ENCODE measurements at regions of chr17 and their contacts with region 1.

Region 1: GRCh38 chr17:7435221-7435675 is at the start of gene TMEM102:
- DNase-seq: peak; percentile 97
- ATAC-seq: peak; percentile 90
- H3K4me3 ChIP-seq: peak within 1 kb of the TSS; percentile 17 to 35
- H3K27ac ChIP-seq: no peak within 1 kb of the TSS
- H3K4me1 ChIP-seq: no peaks in the 10 kb centered on the region
- H3K27me3 ChIP-seq: no peaks in the 10 kb centered on the region
- total RNA-seq, gene TMEM102: 3.6 to 5.1 TPM

Region 2: GRCh38 chr17:7403977-7404736 is 31.1 kb before region 1 on chr17 and contains the start of gene TMEM256:
- intact Hi-C with region 1: loop called in 1 of 2 experiments (anchors 2 kb)
- DNase-seq: peak; percentile 99
- ATAC-seq: peak; percentile 97
- H3K4me3 ChIP-seq: peak within 1 kb of the TSS; percentile 59 to 82
- H3K27ac ChIP-seq: peak within 1 kb of the TSS; percentile 70 to 84
- H3K4me1 ChIP-seq: no peaks in the 10 kb centered on the region
- H3K27me3 ChIP-seq: no peaks in the 10 kb centered on the region
- total RNA-seq, gene TMEM256: 35.0 to 40.1 TPM

Region 3: GRCh38 chr17:7484067-7484918 is 49.0 kb after region 1 on chr17 and contains the start of gene POLR2A:
- intact Hi-C with region 1: loop called (anchors 1 to 2 kb)
- DNase-seq: peak; percentile 99
- ATAC-seq: peak; percentile 93
- H3K4me3 ChIP-seq: peak within 1 kb of the TSS; percentile 56 to 91
- H3K27ac ChIP-seq: peak within 1 kb of the TSS; percentile 94 to 98
- H3K4me1 ChIP-seq: peaks cover 0 to 4% of the 10 kb centered on the region in 2 donors
- H3K27me3 ChIP-seq: peaks cover 0 to 1% of the 10 kb centered on the region in 2 donors
- total RNA-seq, gene POLR2A: 93.8 to 116 TPM

Region 4: DNA sequence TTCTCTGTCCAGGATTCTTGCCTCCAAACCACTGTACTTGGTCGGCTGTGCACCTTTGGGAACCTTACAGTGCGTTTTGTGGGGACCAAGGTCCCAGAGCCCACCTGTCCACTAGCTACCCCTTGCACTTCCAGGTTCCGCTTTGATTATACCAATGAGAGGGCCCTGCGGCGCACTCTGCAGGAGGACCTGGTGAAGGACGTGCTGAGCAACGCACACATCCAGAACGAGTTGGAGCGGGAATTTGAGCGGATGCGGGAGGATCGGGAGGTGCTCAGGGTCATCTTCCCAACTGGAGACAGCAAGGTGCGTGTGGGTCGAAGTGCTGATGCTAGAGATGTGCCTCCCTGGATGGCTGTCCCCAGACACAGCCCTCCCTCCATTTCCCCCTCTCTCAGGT is 67.7 kb after region 1 on chr17:
- intact Hi-C with region 1: no loop called
- DNase-seq: no peak
- ATAC-seq: no peak
- H3K4me3 ChIP-seq: no peak overlapping the region
- H3K27ac ChIP-seq: no peak overlapping the region
- H3K4me1 ChIP-seq: no peaks in the 10 kb centered on the region
- H3K27me3 ChIP-seq: no peaks in the 10 kb centered on the region

Region 5: GRCh38 chr17:7561028-7561575 is 125.9 kb after region 1 on chr17:
- intact Hi-C with region 1: loop called in 1 of 2 experiments (anchors 2 kb)
- DNase-seq: peak; percentile 94 to 97
- ATAC-seq: peak; percentile 89
- H3K4me3 ChIP-seq: peak overlapping the region; percentile 68 to 77
- H3K27ac ChIP-seq: peak overlapping the region; percentile 44 to 64
- H3K4me1 ChIP-seq: no peaks in the 10 kb centered on the region
- H3K27me3 ChIP-seq: no peaks in the 10 kb centered on the region